Prostate gland (tissue), 2 donors: ENCODE measurements at regions of chrX and their contacts with region 1.

Region 1: DNA sequence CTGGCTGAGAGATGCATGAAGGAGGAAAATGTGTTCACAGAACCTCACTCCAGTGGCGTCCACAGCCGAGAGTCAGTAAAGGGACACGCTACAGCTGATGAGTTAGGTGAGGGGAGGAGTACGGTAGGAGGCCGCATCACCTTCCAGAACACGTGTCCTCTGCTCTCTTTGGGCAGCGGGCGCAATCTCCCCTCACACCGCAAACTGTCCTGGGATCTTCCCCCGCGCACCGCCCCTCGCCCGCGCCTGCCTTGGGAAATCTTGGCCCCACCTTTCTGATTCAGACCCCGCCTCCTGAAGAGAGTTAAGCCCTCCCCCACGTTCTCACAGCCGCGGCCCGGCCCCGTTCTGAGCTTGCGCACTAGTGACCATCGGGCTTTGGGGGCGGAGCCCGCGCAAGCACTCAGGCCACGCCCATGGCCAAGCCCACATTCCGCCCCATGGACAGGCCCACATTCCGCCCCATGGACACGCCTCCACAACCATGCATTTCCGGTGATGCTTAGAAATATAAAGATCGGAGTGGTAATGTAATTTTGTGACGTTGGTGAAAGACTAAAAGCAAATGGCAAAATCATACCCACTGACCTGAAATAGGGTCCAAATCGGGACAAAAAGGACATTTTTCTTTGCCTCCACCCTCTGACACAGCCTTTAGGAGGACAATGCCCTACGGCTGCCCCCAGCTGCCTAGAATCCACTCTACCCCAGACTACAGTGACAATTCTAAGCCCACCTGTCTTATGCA is 13.3 kb downstream of the SMIM10 start:
- DNase-seq: peak; percentile 85
- H3K4me3 ChIP-seq: peak overlapping the region; percentile 23 to 26
- H3K27ac ChIP-seq: peak overlapping the region in 1 of 2 donors; percentile 39
- H3K4me1 ChIP-seq: no peaks in the 10 kb centered on the region
- H3K27me3 ChIP-seq: no peaks in the 10 kb centered on the region
- CTCF ChIP-seq: no peak
- POLR2A ChIP-seq: peak; percentile 42

Region 2: DNA sequence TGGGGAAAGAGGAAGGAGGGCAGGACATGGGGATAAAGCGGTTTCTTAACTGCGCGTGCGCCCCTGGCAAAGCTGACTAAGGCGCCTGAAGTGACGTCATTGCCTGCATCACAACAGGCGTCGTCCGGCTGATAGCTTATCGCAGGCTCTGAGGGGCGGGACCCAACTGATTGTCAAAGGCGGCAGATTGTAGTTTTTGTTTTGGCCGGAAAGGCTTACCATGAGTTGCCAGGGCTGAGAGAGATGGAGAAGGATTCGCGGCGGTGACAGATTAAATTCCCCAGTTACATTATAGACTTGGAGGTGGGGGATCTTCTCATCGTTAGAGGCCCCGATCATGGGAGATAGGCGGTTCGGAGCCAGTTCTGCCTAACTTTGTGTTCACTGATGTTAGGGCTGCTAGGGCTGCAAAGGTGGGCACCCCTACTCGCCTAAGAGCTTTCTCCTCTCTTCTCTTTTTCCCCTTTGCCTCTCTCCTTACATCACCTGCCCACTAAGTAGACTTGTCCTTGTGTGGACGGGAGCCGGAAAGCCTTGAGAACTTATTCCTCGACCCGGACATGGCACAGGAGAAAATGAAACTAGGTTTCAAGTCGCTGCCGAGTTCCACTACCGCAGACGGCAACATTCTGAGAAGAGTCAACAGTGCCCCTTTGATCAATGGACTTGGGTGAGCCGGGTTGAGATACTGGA is 196.9 kb before region 1 on chrX:
- intact Hi-C with region 1: loop called (anchors 5 kb)
- DNase-seq: peak; percentile 75
- H3K4me3 ChIP-seq: peak overlapping the region; percentile 44 to 48
- H3K27ac ChIP-seq: peak overlapping the region; percentile 73 to 80
- H3K4me1 ChIP-seq: no peaks in the 10 kb centered on the region
- H3K27me3 ChIP-seq: no peaks in the 10 kb centered on the region
- CTCF ChIP-seq: no peak
- POLR2A ChIP-seq: peak; percentile 47

Region 3: GRCh38 chrX:134969726-134970125 is 34.3 kb before region 1 on chrX:
- intact Hi-C with region 1: loop called (anchors 2 kb)
- DNase-seq: no peak
- H3K4me3 ChIP-seq: no peak overlapping the region
- H3K27ac ChIP-seq: no peak overlapping the region
- H3K4me1 ChIP-seq: no peaks in the 10 kb centered on the region
- H3K27me3 ChIP-seq: no peaks in the 10 kb centered on the region
- CTCF ChIP-seq: no peak
- POLR2A ChIP-seq: no peak